MCF 10A (cell line): ENCODE measurements at regions of chr7 and their contacts with region 1.

Region 1: DNA sequence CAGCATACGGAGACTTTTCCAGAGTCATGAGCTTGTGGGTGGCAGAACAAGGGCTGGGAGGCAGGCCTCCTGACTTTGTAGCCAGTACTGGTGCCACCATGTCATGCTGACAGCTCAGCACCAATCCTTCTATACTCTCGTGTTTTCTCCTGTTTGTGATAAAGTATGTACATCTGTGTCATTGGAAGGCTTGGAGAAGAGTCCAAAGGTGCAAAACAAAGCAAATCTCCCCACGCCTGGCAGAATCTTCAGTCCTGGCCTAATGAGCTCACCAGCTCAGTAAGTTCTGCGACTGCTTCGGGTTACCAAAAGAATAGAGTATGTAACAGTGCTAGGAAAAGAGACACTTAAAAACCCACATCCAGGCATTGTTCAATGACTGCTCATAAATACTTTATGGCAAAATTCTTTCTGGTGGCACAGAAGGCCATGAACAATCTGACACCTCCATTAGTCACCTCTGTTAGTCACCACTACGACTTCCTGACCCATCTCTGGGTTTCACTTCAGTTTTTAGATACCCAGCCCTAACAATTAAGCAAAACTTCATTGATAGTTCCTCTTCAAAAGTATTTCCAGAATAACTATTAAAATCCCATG is 24.5 kb downstream of the STEAP1 start:
- DNase-seq: peak; percentile 82
- H3K4me3 Mint-ChIP-seq: no peak overlapping the region
- H3K27ac Mint-ChIP-seq: peak overlapping the region; percentile 83
- H3K4me1 Mint-ChIP-seq: peaks cover 16% of the 10 kb centered on the region
- H3K27me3 Mint-ChIP-seq: no peaks in the 10 kb centered on the region
- CTCF ChIP-seq: no peak

Region 2: GRCh38 chr7:90025771-90026170 is 153.0 kb before region 1 on chr7:
- CTCF ChIA-PET with region 1: no interaction called
- POLR2A ChIA-PET with region 1: no interaction called
- intact Hi-C with region 1: no loop called
- DNase-seq: no peak
- H3K4me3 Mint-ChIP-seq: no peak overlapping the region
- H3K27ac Mint-ChIP-seq: no peak overlapping the region
- H3K4me1 Mint-ChIP-seq: no peaks in the 10 kb centered on the region
- H3K27me3 Mint-ChIP-seq: peaks cover 33% of the 10 kb centered on the region
- CTCF ChIP-seq: no peak

Region 3: DNA sequence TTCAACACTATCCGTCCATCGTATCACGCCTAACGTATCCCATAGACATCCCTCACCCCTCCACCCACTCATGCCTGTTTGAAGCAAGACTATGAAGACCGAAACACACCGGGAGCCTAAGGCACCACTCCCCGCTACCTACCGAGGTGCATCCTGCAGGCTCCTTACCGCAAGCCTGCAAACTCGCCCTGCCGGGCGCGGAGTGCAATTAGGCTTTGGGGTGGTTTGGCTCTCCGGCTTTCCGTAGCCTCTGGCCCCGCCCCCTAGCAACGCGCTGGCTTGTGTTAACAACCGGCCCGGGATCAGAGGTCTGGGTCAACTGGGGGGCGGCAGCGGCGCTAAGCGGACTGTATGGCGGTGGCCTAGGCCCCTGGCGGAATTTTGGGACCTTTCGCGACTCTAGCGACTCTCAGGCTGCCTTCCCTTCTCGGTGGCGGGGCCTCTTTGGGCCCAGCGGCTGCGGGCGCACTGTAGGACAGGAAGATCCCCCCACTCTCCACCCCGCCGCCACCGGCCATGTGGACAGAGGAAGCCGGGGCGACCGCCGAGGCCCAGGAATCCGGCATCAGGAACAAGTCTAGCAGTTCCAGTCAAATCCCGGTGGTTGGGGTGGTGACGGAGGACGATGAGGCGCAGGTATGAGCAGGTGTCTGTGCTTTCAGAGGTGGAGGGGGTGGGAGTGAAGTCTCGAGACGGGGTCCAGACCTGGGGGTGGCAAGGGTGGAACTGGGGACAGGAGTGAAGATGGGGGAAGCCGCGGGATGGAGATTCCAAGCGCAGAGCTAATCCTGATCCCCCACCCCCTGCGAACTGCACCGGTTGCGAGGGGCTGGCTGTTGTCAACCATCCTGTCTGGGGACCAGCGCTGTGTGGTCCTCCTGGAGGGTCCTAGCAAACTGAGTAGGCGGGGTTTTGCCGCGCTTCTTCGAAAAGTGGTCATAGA is 66.4 kb after region 1 on chr7 and contains the start of gene CFAP69:
- CTCF ChIA-PET with region 1: no interaction called
- POLR2A ChIA-PET with region 1: no interaction called
- intact Hi-C with region 1: loop called (anchors 2 kb)
- DNase-seq: peak; percentile 83
- H3K4me3 Mint-ChIP-seq: peak within 1 kb of the TSS; percentile 79
- H3K27ac Mint-ChIP-seq: peak within 1 kb of the TSS; percentile 87
- H3K4me1 Mint-ChIP-seq: peaks cover 8% of the 10 kb centered on the region
- H3K27me3 Mint-ChIP-seq: no peaks in the 10 kb centered on the region
- CTCF ChIP-seq: no peak
- total RNA-seq, gene CFAP69: 2.9 and 3.7 TPM in 2 replicates

Region 4: DNA sequence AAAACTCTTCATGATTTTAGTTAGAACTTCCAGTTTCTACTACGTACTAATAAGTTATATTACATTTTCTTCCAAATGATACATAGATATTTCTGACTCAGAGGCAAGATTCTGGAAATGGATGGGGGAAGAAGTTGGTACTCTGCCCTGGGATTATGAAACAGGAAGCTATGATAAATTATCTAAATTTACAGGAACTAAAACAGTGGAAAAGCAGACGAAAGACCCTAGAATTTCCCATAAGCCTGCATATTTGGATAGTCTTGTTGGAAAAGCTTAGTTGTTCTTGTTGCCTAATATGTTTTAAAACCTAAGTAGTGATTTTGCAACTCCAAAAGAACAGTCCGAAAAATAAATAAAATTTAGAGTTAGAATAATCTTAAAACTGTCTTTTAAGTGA is 88.0 kb after region 1 on chr7:
- CTCF ChIA-PET with region 1: no interaction called
- POLR2A ChIA-PET with region 1: no interaction called
- intact Hi-C with region 1: no loop called
- DNase-seq: peak; percentile 68
- H3K4me3 Mint-ChIP-seq: no peak overlapping the region
- H3K27ac Mint-ChIP-seq: no peak overlapping the region
- H3K4me1 Mint-ChIP-seq: no peaks in the 10 kb centered on the region
- H3K27me3 Mint-ChIP-seq: no peaks in the 10 kb centered on the region
- CTCF ChIP-seq: no peak

Region 5: GRCh38 chr7:90320801-90321494 is 142.2 kb after region 1 on chr7 and contains the start of gene FAM237B:
- CTCF ChIA-PET with region 1: no interaction called
- POLR2A ChIA-PET with region 1: no interaction called
- intact Hi-C with region 1: no loop called
- DNase-seq: no peak
- H3K4me3 Mint-ChIP-seq: no peak within 1 kb of the TSS
- H3K27ac Mint-ChIP-seq: no peak within 1 kb of the TSS
- H3K4me1 Mint-ChIP-seq: no peaks in the 10 kb centered on the region
- H3K27me3 Mint-ChIP-seq: peaks cover 78% of the 10 kb centered on the region
- CTCF ChIP-seq: no peak
- total RNA-seq, gene FAM237B: not detected in 2 replicates